AG04450 (cell line): ENCODE measurements at regions of chr4 and their contacts with region 1.

Region 1: GRCh38 chr4:17576932-17577665 is at the start of gene LAP3:
- DNase-seq: peak; percentile 92
- H3K4me3 ChIP-seq: peak within 1 kb of the TSS; percentile 74
- H3K27ac ChIP-seq: peak within 1 kb of the TSS; percentile 80
- H3K27me3 ChIP-seq: no peaks in the 10 kb centered on the region
- CTCF ChIP-seq: no peak
- polyA plus RNA-seq, gene LAP3: 57.2 and 63.3 TPM in 2 replicates

Region 2: DNA sequence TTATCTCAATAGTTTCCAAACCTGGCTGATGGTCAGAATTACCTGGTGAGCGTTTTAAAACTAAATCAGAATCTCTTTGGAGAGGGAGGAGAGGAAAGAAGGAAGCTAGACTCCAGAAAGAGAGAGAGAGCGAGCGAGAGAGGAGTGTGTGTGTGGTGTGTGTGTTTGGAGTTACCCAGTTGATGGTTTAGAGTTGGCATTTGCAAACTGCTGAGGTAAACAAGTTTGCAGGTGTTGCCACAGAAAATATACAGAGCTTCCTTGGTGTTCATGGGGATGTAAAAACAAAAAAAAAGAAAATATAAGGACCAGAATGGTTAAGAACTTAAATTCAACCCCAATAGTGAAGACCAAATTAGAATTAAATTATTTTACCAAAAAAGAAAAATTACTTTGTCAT is 26.6 kb before region 1 on chr4:
- CTCF ChIA-PET with region 1: interaction called, 17 read pairs
- POLR2A ChIA-PET with region 1: interaction called, 3 read pairs
- DNase-seq: no peak
- H3K4me3 ChIP-seq: no peak overlapping the region
- H3K27ac ChIP-seq: no peak overlapping the region
- H3K27me3 ChIP-seq: peaks cover 10% of the 10 kb centered on the region
- CTCF ChIP-seq: no peak